AG04449 (cell line): ENCODE measurements at regions of chr17 and their contacts with region 1.

Region 1: DNA sequence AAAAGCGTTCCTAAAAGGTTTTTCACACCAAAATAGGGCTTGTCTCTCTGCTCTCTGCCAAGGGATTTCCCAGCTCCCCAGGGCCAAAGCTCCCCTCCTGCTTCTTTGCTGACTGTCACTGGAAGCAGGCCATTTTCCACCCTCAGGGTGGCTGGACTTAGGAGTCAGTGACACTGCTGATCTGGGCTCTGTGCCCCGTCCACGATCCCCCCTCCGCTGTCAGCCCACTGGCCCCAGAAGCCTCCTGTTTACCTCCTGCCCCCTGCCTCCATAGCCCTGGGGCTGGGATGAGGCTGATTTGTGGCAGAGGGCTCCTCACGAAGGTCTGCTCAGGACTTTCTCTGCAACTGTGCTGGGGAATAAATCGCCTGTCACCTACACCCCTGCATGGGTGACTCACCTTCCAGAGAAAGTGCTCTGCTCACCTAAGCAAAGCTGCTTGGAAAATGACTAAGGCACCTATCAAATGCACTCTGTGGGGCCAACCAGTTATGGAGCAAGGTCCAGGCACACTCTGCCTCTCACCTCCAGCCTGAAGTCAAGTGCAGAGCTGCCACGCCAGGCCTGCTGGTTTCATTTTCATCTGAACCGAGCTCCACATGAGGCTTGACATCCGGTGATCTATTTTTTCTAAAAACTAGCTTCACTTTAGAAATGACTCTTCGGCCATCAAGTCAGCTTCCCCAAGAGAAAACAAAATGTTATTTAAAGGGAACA is 4.9 kb downstream of the MAP3K14 start:
- DNase-seq: no peak
- H3K4me3 ChIP-seq: no peak overlapping the region
- CTCF ChIP-seq: no peak

Region 2: GRCh38 chr17:45293413-45294211 is 18.3 kb before region 1 on chr17:
- CTCF ChIA-PET with region 1: interaction called, 35 read pairs
- POLR2A ChIA-PET with region 1: interaction called, 4 read pairs
- DNase-seq: no peak
- H3K4me3 ChIP-seq: no peak overlapping the region
- CTCF ChIP-seq: peak; percentile 30

Region 3: GRCh38 chr17:45371414-45372327 is 59.8 kb after region 1 on chr17:
- CTCF ChIA-PET with region 1: interaction called, 14 read pairs
- POLR2A ChIA-PET with region 1: interaction called, 15 read pairs
- DNase-seq: peak; percentile 94
- H3K4me3 ChIP-seq: peak overlapping the region; percentile 18; the same call in 1 of the 2 replicates
- CTCF ChIP-seq: peak; percentile 22